PC-3 (cell line): ENCODE measurements at regions of chr3 and their contacts with region 1.

Region 1: GRCh38 chr3:14261229-14261628 is 82.6 kb downstream of the LSM3 start:
- DNase-seq: peak; percentile 85
- ATAC-seq: peak; percentile 53
- H3K4me3 ChIP-seq: no peak overlapping the region
- H3K27ac ChIP-seq: no peak overlapping the region
- H3K4me1 ChIP-seq: peaks cover 9% of the 10 kb centered on the region
- H3K27me3 ChIP-seq: no peaks in the 10 kb centered on the region
- CTCF ChIP-seq: peak; percentile 98

Region 2: GRCh38 chr3:14178247-14179113 is 82.7 kb before region 1 on chr3 and contains the starts of genes LSM3 and XPC:
- CTCF ChIA-PET with region 1: no interaction called
- POLR2A ChIA-PET with region 1: no interaction called
- intact Hi-C with region 1: no loop called
- DNase-seq: peak; percentile 99
- ATAC-seq: peak; percentile 95
- H3K4me3 ChIP-seq: peak within 1 kb of the TSS; percentile 74
- H3K27ac ChIP-seq: peak within 1 kb of the TSS; percentile 39
- H3K4me1 ChIP-seq: peaks cover 31% of the 10 kb centered on the region
- H3K27me3 ChIP-seq: no peaks in the 10 kb centered on the region
- CTCF ChIP-seq: no peak
- total RNA-seq, gene LSM3: 22.0 and 27.2 TPM in 2 replicates
- total RNA-seq, gene XPC: 24.3 and 26.1 TPM in 2 replicates

Region 3: DNA sequence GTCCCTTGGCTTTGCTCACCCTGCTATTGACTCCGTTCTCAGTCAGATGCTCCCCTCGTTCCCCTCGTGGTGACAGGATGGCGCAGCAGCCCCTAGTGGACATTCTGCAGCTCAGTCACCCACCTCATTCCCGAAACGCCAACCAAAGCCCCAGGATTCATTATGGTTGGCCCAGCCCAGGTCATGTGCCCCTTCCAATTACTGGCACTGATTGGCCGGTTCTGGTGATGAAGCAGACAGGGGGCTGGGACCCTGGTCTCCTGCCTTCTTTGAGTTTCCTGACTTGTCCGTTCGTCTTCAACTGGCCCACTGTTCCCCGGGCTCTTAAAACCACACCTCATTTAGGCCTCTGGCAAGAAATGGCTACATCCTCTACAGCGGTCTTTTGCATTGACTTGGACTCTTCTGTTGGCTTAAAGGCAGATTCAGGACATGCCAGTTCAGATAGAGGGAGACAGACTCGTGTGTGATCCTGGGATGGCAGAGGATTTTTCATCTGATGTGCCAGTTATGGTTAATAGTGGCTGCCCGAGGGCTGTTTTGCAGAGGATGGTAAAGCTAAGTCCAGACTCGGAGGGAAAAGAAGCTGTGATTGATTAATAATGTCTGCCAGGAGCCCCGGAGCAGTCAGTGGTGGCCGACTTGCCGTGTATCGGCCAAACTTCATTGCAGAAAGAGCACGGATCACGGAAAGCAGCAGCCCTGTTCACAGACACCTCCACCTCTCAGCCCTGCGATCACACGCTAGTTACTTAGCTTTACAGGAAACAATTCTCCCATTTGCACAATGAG is 44.8 kb before region 1 on chr3:
- CTCF ChIA-PET with region 1: no interaction called
- POLR2A ChIA-PET with region 1: no interaction called
- intact Hi-C with region 1: no loop called
- DNase-seq: no peak
- ATAC-seq: no peak; the same call in 1 of the 2 replicates
- H3K4me3 ChIP-seq: no peak overlapping the region
- H3K27ac ChIP-seq: no peak overlapping the region
- H3K4me1 ChIP-seq: no peaks in the 10 kb centered on the region
- H3K27me3 ChIP-seq: no peaks in the 10 kb centered on the region
- CTCF ChIP-seq: peak; percentile 36; the same call in 1 of the 2 replicates

Region 4: DNA sequence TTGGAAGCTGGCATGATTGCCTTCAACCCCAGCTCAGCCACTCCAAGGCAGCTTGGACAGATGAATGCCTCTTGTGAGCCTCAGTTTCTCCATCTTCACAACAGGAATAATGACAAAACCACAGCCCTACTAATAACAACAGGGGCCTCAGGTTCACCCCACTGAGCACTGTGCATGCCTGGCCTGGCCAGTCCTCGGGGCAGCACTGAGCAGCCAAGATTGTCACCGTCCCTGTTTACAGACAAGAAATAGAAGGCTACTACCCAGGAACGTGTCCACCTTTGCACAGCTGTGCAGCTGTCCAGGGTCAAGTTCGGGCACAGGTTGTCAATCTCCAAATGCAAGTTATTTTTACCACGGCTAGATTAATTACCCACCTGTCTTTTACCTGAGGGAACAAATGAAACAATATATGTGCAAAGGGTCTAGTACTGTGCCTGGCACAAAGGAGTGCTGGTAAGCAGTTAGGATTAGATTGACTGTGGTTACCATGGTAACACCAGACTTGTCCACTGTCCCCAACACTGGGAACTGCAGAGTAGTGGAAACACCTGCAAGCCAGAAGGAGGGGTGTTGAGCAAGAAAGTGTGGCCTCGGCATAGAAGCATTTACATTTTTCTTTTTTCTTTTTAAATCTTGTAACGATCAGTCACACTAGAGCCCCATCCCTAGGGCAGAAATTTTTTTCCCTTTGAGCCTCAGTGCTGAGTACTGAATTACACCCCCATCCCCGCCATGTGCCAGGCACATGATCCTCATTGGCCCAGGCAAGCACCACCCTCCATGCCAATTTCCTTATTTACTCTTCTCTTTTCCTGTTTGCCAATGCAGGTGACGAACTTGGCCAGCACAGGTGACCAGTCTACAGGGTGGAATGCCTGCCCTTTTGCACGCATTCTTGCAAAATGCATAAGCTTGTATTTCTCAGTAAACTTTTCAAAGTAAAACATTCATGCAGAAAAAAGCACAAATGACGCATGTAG is 74.8 kb after region 1 on chr3:
- CTCF ChIA-PET with region 1: no interaction called
- POLR2A ChIA-PET with region 1: no interaction called
- intact Hi-C with region 1: loop called (anchors 2 kb)
- DNase-seq: peak; percentile 93
- ATAC-seq: peak; percentile 91
- H3K4me3 ChIP-seq: no peak overlapping the region; the same call in 1 of the 2 replicates
- H3K27ac ChIP-seq: peak overlapping the region; percentile 63
- H3K4me1 ChIP-seq: peaks cover 21% of the 10 kb centered on the region
- H3K27me3 ChIP-seq: no peaks in the 10 kb centered on the region
- CTCF ChIP-seq: no peak

Region 5: DNA sequence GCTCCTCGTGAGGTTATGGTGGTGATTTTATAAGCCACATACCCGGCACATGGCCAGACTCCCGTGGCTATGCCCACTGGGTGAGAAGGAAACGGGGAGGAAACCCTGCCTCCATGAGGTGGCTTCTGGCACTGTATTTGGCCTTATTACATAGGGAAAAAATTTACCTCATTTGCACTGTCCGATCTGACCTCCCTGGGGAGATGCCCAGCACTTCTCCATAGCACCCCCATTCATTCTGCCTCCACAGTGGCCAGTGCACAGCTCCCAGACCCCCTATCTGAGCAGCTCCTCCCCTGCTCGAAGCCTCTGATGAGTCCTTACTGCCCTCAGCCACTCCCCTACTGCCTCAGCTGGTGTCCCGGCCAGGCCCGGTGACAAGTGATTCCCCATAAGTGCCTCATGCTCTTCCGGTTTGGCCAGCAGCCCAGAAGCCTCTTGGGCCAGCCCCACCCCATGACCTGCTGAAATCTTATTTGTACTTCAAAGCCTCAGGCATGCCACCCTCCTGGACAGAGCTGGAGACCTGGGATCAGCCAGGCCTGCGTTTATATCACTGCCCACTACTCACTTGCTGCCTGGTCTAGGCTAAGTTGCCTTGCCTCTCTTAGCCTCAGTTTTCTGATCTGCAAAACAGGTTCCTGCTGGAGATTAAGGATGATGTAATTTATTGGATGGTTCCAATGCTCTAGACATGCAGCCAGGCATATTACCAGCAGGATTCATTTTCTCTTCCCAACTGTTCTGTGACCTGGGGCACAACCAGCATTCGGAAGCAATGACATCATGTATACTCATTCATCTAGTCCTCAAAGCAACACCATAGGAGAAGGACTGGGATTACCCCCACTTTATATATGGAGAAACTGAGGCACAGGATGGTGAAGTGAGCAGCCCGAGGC is 110.6 kb after region 1 on chr3:
- CTCF ChIA-PET with region 1: interaction called, 3 read pairs
- POLR2A ChIA-PET with region 1: no interaction called
- intact Hi-C with region 1: loop called (anchors 1 kb)
- DNase-seq: peak; percentile 95
- ATAC-seq: peak; percentile 83
- H3K4me3 ChIP-seq: no peak overlapping the region
- H3K27ac ChIP-seq: peak overlapping the region; percentile 40
- H3K4me1 ChIP-seq: peaks cover 34% of the 10 kb centered on the region
- H3K27me3 ChIP-seq: no peaks in the 10 kb centered on the region
- CTCF ChIP-seq: peak; percentile 38; the same call in 1 of the 2 replicates

Region 6: GRCh38 chr3:14461748-14462324 is 200.6 kb after region 1 on chr3:
- CTCF ChIA-PET with region 1: no interaction called
- POLR2A ChIA-PET with region 1: no interaction called
- intact Hi-C with region 1: loop called (anchors 1 kb)
- DNase-seq: peak; percentile 74
- ATAC-seq: peak; percentile 73
- H3K4me3 ChIP-seq: no peak overlapping the region
- H3K27ac ChIP-seq: no peak overlapping the region
- H3K4me1 ChIP-seq: peaks cover 12% of the 10 kb centered on the region
- H3K27me3 ChIP-seq: no peaks in the 10 kb centered on the region
- CTCF ChIP-seq: peak; percentile 97

Region 7: DNA sequence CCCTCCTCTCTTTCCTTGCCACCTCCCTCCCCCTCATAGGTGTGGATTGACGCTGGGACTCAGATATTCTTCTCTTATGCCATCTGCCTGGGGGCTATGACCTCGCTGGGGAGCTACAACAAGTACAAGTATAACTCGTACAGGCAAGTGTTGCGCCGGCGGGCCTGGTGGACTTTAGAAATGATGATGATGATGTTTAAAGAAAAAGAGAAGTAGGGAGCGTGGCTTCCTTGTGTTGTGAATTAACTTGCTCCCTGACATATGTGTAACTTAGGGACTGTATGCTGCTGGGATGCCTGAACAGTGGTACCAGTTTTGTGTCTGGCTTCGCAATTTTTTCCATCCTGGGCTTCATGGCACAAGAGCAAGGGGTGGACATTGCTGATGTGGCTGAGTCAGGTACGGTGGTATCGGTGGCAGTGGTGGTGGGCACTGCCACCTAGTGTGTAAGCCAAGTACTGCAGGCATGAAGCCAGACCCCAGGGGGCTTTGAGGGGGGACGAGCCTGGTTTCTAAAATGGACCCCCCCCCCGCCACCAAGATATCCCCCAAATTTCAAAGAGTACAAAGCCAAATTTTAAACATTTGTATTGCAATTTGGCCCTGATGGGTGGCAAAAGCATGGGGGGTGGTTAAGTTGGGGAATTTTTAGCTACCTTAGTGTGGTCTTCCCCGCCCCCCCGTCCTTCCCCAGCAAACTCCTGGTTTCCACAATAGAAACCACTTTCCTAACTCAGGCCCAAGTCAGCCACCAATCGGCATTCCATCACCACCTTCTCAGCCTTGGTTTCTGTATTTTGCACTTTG is 206.8 kb after region 1 on chr3:
- CTCF ChIA-PET with region 1: interaction called, 4 read pairs
- POLR2A ChIA-PET with region 1: no interaction called
- intact Hi-C with region 1: loop called (anchors 2 kb)
- DNase-seq: peak; percentile 50
- ATAC-seq: peak; percentile 23
- H3K4me3 ChIP-seq: no peak overlapping the region
- H3K27ac ChIP-seq: no peak overlapping the region
- H3K4me1 ChIP-seq: peaks cover 14% of the 10 kb centered on the region
- H3K27me3 ChIP-seq: no peaks in the 10 kb centered on the region
- CTCF ChIP-seq: peak; percentile 90

Region 8: GRCh38 chr3:14548321-14548729 is 287.1 kb after region 1 on chr3:
- CTCF ChIA-PET with region 1: no interaction called
- POLR2A ChIA-PET with region 1: no interaction called
- intact Hi-C with region 1: loop called (anchors 2 kb)
- DNase-seq: peak; percentile 65
- ATAC-seq: peak; percentile 87
- H3K4me3 ChIP-seq: no peak overlapping the region
- H3K27ac ChIP-seq: no peak overlapping the region
- H3K4me1 ChIP-seq: 0 out of 2 replicates have a peak, but pooled peaks cover 4% of the 10 kb centered on the region
- H3K27me3 ChIP-seq: no peaks in the 10 kb centered on the region
- CTCF ChIP-seq: peak; percentile 83